ENCODE measurements at regions of chr10 and their contacts with region 1.

Region 1: DNA sequence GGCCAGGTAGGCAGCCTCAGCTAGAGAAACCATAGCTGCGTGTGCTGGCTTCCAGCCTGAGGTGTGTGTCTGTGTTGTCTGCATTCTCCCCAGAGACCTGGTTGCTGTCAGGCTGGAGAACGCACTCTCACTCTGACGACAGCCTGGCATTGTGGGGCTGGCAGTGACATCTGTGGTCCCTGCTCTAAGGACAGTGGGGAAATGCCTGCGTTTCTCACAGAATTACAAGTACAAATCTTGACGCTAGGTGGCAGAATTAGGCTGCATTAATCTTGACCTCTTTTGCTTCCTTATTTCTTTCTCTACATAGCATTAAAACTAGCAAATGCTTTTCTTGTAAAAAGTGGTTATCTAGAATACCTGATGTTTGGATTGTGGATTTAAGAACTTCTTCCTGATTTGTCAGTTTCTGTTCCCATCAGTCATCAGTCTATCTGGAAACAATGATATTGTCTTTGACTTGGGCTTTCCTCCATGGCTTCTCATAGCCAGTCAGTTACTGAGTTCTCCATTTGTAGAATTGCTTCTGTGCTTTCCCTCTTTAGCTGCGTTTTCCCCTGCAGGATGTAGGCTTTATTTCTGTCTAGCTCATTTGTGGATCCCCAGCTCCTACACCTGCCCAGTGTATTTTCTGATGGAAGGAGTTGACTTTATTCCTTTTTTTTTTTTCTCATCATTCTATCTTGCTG is 86.0 kb downstream of the FANK1 start:
- DNase-seq: peak; percentile 26
- H3K4me3 ChIP-seq: no peak overlapping the region
- CTCF ChIP-seq: peak; percentile 32

Region 2: DNA sequence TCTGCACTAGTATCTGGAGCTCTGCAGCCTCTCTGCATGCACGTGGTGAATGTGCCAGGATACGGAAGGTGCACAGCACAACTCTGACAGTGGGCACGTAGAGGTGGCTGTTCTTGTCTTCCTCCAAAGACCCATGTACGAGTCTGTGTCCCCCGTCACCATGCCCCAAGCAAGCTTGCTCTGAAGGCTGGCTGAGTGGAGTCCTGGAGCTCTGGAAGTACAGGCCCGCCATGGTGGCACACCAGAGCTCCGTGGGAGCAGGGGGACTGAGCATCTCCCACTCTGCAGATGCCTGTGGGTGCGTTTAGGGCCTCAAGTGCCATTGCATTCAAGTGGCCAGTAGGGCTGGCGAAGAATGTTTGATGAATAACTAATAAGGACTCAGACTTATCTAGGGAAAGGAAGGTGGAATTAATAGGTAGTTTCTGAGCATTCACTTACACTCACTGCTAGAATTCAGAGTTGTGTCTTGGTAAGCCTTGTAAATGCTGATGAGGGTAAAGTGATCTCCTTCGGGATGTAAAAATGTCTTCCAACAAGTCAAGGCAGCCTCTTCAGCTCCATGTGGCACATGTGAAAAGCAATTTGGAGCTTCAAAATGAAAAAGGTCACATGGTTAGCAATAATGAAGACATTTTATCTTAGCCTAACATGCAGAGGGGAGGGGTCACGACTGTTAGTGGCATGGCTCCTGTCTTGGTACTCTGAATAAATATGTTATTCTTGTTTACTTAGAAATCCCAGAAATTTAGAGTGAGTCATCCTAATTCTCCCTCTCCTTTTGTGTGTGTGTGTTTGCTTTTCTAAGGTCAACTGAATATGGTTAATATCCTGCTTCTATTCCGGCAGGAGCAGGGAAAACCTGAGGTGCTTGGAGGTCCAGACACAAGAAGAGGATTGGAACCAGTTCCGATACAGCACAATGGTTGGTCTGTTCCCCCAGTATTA is 141.7 kb before region 1 on chr10:
- CTCF ChIA-PET with region 1: no interaction called
- POLR2A ChIA-PET with region 1: no interaction called
- DNase-seq: no peak
- H3K4me3 ChIP-seq: no peak overlapping the region
- CTCF ChIP-seq: no peak

Region 3: GRCh38 chr10:125953778-125954385 is 28.5 kb before region 1 on chr10:
- CTCF ChIA-PET with region 1: no interaction called
- POLR2A ChIA-PET with region 1: no interaction called
- DNase-seq: no peak
- H3K4me3 ChIP-seq: no peak overlapping the region
- CTCF ChIP-seq: no peak

Region 4: GRCh38 chr10:126294451-126294850 is 312.0 kb after region 1 on chr10:
- CTCF ChIA-PET with region 1: interaction called, 20 read pairs
- POLR2A ChIA-PET with region 1: no interaction called
- DNase-seq: no peak
- H3K4me3 ChIP-seq: no peak overlapping the region
- CTCF ChIP-seq: no peak

Region 5: DNA sequence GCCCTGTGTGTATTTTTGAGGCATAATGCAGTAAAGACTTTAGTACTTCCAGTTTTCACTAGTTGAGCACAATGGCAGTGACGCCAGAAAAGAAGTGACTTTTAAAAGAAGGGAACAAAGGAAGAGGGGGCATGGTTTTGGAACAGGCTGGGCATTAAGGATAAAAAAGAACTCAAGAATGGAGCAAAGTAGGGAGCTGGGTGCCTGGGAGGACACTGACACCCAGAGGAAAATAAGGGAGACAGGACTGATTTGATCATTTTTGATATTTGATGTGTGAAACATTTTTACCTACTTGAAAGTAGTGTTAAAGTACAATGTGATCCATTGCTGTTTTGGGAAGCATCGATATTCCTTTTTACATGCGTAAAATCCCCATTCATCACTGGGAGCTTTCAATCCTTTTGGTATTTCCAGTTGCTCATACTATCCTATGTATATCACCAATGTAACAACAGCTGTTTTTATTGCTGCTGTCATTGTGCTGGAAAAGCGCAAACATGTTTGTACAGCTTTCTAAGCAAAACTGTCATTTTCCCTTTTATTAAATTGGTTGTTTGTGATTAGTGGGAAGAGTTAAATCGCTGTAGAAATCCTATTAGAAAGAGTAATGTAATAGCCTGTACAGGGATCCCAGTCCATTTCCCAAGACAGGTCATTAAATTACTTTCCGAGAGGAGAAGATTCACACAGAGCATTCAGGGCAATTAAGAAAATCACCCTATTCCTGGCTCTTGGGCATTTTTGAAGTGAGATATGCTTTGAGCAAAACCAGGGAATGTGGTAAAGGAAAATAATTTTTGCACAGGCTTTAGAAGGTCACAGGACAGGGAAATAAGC is 320.6 kb after region 1 on chr10:
- CTCF ChIA-PET with region 1: interaction called, 20 read pairs
- POLR2A ChIA-PET with region 1: no interaction called
- DNase-seq: no peak
- H3K4me3 ChIP-seq: no peak overlapping the region
- CTCF ChIP-seq: peak; percentile 3

Region 6: GRCh38 chr10:126387023-126387921 is 404.9 kb after region 1 on chr10:
- CTCF ChIA-PET with region 1: interaction called, 31 read pairs
- POLR2A ChIA-PET with region 1: no interaction called
- DNase-seq: no peak
- H3K4me3 ChIP-seq: peak overlapping the region; percentile 81
- CTCF ChIP-seq: peak; percentile 87

Region 7: DNA sequence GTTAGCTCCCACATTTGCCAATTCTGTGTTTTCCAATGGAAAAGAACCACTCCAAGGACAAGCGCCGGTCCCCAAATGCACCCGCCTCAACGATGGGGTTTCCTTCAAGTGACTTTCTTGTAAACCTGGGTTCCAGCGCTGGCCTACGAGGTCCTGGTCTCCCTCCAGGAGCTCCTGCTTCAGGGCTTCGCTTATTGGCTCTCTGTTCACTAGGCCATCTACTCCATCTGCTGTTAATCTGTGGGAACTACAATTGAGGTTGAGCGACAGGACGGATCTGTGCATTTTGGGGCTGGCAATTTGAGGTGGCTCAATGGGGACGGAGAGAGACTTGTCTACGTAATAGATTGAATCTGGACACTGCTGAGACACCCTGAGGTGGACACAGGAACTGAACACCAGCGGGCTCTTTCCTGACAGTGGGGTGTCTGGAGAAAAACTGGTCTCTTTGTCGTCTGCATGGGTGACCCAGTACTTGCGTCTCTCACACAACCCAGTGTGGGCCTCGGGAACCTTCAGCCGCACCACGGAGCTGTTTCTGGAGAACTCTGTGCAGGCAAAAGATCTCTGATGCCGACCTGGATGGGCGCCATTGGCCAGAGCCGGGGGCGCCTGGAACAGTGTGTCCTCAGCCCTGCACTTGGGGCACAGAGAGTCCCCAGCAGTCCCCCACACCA is 521.8 kb after region 1 on chr10:
- CTCF ChIA-PET with region 1: interaction called, 116 read pairs
- POLR2A ChIA-PET with region 1: no interaction called
- DNase-seq: no peak
- H3K4me3 ChIP-seq: no peak overlapping the region
- CTCF ChIP-seq: peak; percentile 73